ENCODE measurements at regions of chr9 and their contacts with region 1.

Region 1: GRCh38 chr9:94783102-94783664 is 56.7 kb downstream of the AOPEP start:
- DNase-seq: peak; percentile 80
- H3K4me3 Mint-ChIP-seq: no peak overlapping the region
- H3K27ac Mint-ChIP-seq: no peak overlapping the region
- H3K4me1 Mint-ChIP-seq: peaks cover 11% of the 10 kb centered on the region
- H3K27me3 Mint-ChIP-seq: no peaks in the 10 kb centered on the region

Region 2: GRCh38 chr9:94681508-94681907 is 101.7 kb before region 1 on chr9:
- intact Hi-C with region 1: loop called (anchors 5 kb)
- DNase-seq: peak; percentile 86
- H3K4me3 Mint-ChIP-seq: no peak overlapping the region
- H3K27ac Mint-ChIP-seq: no peak overlapping the region
- H3K4me1 Mint-ChIP-seq: peaks cover 5% of the 10 kb centered on the region
- H3K27me3 Mint-ChIP-seq: peaks cover 41% of the 10 kb centered on the region